HCT116 (cell line): ENCODE measurements at regions of chrX and their contacts with region 1.

Region 1: DNA sequence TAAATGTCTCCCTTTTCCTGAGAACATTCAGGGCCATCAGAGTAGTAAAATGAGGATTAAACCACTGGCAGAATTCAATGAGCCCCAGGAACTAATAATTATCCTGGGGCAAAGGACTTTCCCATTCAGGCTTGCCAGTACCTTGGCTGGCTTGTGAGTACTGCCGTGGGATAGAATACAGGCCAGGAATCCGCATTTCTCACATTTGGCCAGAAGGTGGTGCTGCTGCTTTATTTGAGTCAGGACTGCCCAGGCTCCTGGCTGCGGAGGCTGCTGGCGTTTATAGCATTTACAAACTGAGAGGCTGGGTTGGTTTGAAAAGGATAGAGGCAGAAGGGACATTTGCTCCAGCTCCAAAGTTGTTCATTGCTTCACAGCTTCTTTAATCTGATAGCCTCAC is 91.4 kb downstream of the RTL9 start:
- DNase-seq: peak; percentile 29
- ATAC-seq: peak; percentile 94
- H3K4me3 ChIP-seq: no peak overlapping the region
- H3K27ac ChIP-seq: no peak overlapping the region
- H3K4me1 ChIP-seq: no peaks in the 10 kb centered on the region
- H3K27me3 ChIP-seq: peaks cover 27% of the 10 kb centered on the region
- CTCF ChIP-seq: peak; percentile 41 to 65 (median 61); a peak in 5 of 6 replicates
- POLR2A ChIP-seq: no peak
- RAD21 ChIP-seq: peak; percentile 73

Region 2: DNA sequence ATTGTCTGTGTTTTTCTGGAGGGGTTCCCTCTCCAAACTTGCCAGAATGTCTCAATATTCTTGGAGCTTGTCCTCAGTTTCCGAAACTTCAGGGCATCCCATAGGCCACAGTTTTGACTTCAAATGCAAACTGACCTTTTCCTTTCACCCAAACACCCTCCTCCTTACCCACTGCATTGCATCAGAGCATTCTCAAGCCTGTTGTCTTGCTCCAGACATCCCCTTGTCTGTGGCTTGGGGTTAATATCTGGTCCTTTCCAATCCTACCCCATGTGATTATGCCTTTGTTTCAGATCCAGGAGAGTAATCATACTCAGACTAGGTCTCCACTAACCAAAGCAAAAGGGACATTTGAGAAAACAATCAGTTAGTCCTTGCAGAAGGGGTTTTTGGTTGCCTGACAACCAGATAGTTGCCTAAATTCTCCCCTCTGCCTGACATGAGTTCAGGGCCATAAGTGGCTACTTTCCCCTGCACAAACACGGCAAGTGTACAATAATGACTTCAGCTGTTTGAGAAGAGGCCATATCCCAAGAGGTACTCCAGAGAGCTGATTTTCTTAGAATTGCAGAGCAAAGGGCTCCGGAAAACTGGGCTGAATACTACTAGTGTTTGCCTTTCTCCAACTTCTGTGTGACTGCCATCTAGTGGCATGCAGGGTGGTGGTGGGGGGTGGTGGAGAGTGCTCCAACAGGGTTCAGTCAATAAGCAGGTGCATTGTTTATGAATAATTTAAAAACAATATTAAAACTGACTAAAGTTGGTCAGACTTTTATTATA is 215.4 kb after region 1 on chrX:
- CTCF ChIA-PET with region 1: no interaction called
- POLR2A ChIA-PET with region 1: no interaction called
- RAD21 ChIA-PET with region 1: no interaction called
- intact Hi-C with region 1: loop called (anchors 2 kb)
- DNase-seq: no peak
- ATAC-seq: peak; percentile 81
- H3K4me3 ChIP-seq: no peak overlapping the region
- H3K27ac ChIP-seq: no peak overlapping the region
- H3K4me1 ChIP-seq: no peaks in the 10 kb centered on the region
- H3K27me3 ChIP-seq: no peaks in the 10 kb centered on the region; the same call in 1 of the 2 replicates
- CTCF ChIP-seq: peak; percentile 23 to 56 (median 47); a peak in 5 of 6 replicates
- POLR2A ChIP-seq: no peak
- RAD21 ChIP-seq: peak; percentile 37